Activated CD8-positive, alpha-beta T cell treated with anti-CD3 and anti-CD28 coated beads, Interleukin-2, amount 10 ng/mL, durations not matched to agents 7 days and 5 days (primary cell): ENCODE measurements at regions of chr3 and their contacts with region 1.

Region 1: DNA sequence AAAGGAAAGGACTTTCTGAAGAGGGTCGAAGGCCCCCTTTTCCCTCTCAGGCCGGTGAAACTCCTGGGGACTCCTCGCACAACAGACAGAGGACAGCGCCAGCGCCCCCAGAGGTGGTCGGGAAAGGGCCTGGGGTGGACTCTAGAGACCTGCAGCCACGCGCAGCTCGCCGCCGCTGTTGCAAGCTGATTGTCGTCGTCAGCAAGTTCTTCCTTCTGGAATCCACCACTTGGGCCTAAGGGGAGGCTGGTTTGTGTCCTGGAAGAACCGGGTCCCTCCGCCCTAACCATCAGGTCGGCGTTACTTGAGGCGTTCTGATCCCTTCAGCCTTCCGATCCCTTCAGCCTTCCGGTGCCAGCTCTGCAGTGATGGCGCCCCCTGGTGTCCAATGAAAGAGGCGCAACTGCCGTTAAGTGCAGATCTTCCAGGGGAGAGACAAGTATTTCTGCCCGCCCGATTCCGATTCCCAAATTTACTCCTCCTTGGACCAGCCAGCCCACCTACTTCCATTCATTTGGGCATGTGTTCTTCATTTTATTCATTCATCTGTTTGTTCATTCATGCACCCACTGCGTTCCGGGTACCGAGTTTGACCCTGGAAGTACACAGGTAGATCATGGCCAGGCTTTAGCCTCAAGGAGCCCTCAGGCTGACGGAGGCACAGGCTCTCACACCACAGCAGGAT is 77.2 kb upstream of the SLC6A11 start:
- DNase-seq: peak; percentile 73
- ATAC-seq: peak; percentile 82
- H3K4me3 Mint-ChIP-seq: no peak overlapping the region
- H3K27ac Mint-ChIP-seq: no peak overlapping the region
- H3K4me1 Mint-ChIP-seq: peaks cover 11% of the 10 kb centered on the region
- H3K27me3 Mint-ChIP-seq: peaks cover 18% of the 10 kb centered on the region

Region 2: GRCh38 chr3:10344147-10344943 is 394.5 kb before region 1 on chr3:
- CTCF ChIA-PET with region 1: interaction called, 25 read pairs
- POLR2A ChIA-PET with region 1: no interaction called
- DNase-seq: peak; percentile 66
- ATAC-seq: peak; percentile 54
- H3K4me3 Mint-ChIP-seq: no peak overlapping the region
- H3K27ac Mint-ChIP-seq: no peak overlapping the region
- H3K4me1 Mint-ChIP-seq: no peaks in the 10 kb centered on the region
- H3K27me3 Mint-ChIP-seq: no peaks in the 10 kb centered on the region

Region 3: DNA sequence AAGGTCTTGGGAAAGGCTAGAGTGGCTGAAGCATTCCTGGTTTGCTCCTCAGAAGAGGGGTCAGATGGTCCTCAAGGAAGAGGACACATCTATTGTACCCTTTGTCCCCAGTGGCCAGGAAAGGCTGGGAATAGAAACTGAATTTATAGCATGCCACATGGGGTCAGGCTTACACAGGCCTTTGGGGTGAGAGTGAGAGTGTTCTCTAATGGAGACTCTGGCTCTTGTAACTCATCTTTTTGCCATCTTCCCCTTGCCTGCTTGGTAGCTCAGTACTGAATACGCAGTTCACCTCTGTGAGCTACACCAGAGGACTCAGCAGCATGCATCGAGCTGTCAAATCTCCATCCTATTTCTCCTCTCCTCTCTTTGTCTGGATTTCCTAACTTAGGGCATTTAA is 321.0 kb before region 1 on chr3:
- CTCF ChIA-PET with region 1: interaction called, 21 read pairs
- POLR2A ChIA-PET with region 1: no interaction called
- DNase-seq: peak; percentile 28
- ATAC-seq: peak; percentile 40
- H3K4me3 Mint-ChIP-seq: no peak overlapping the region
- H3K27ac Mint-ChIP-seq: peak overlapping the region; percentile 48
- H3K4me1 Mint-ChIP-seq: peaks cover 10% of the 10 kb centered on the region
- H3K27me3 Mint-ChIP-seq: peaks cover 6% of the 10 kb centered on the region